Esophagus muscularis mucosa (tissue), 4 donors: ENCODE measurements at regions of chr9 and their contacts with region 1.

Region 1: DNA sequence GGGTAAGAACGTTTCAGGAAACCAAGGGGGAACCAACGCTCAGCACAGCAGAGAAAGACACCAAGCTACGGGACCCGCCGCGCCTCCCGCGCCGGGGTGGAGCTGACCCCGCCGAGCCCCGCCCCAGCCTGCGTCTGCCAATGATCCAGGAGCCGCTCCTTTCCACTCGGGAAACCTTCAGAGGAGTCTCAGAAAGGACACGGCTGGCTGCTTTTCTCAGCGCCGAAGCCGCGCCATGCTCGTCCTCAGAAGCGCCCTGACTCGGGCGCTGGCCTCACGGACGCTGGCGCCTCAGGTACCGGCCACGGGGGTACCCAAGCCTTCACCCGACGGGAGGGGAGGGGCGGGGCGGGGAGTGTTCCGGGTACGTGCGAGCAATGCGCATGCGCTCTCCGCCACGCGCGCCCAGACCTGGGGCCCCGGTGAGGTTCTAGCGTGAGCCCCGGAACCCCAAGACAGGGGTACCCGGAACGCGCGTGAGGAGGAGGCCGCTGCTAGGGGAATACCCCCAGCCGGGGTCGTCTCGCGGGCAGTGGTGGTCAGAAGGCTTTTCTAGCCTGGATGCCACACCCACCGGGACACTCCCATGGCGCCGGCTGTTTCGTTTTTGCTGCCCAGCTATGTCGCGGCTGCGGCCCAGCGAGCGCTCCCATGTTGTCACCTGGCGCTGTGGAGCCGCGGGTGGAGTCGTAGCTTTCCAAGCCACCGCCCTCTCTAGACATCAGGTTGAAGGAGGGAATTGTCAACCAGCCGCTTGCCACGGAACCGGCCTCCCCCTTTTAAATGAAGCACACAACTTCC is at the start of gene NIPSNAP3A:
- DNase-seq: peak; percentile 95
- H3K4me3 ChIP-seq: peak within 1 kb of the TSS; percentile 65 to 98 (median 84)
- H3K27ac ChIP-seq: peak within 1 kb of the TSS; percentile 81 to 95 (median 92)
- H3K4me1 ChIP-seq: peaks cover 11 to 23% (median 19%) of the 10 kb centered on the region in 4 donors
- H3K27me3 ChIP-seq: no peaks in the 10 kb centered on the region
- CTCF ChIP-seq: no peak
- EP300 ChIP-seq: no peak
- POLR2A ChIP-seq: no peak
- total RNA-seq, gene NIPSNAP3A: 19.0 to 33.3 (median 29.7) TPM

Region 2: DNA sequence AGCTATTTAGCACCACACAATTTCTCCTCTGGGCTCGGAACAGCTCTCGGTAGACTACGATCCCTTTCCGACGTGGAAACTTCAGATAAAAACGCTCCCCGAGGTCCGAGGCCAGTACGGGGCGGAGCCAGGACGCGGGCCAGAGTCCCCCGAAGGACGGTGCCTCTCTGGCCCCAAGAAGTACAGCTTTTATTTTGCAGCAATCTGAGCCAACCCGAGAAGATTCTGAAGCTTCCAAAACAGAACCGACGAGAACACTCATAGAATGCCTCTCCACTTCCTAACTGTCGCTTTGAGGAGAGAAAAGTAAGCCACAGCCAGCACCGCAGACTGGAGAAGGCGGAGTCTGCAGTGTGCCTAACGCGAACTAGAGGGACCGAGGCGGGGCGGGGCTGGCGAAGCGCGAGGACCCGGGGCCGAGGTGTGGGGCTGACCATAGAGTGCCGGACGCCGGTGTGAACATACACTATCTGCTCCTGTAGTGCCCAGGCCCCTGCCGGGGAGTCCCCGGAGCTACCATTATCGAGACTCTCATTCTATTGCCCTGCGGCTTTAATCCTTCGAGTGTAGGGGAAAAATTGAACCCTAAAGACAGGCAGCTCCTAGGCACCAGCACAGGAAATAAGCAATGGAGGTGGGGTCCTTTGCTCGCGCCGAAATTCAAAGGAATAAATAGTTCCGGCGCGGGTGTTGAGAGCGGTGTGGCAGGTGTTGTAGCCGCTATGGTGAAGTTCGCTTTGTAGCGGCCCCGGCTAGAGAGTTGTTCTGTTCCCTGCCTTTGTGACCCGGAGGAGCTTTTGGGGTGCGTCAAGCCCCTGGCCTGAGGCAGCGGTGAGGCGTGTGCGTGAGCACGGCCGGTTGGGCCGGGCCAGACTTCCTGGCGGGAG is 653.9 kb before region 1 on chr9 and contains the start of gene SMC2:
- intact Hi-C with region 1: loop called (anchors 10 kb)
- DNase-seq: peak; percentile 98
- H3K4me3 ChIP-seq: peak within 1 kb of the TSS; percentile 59 to 90 (median 74)
- H3K27ac ChIP-seq: peak within 1 kb of the TSS; percentile 90 to 94 (median 93)
- H3K4me1 ChIP-seq: peaks cover 22 to 56% (median 50%) of the 10 kb centered on the region in 4 donors
- H3K27me3 ChIP-seq: no peaks in the 10 kb centered on the region
- CTCF ChIP-seq: peak in 1 of 3 experiments; percentile 6
- EP300 ChIP-seq: no peak
- POLR2A ChIP-seq: no peak
- total RNA-seq, gene SMC2: 9.8 to 11.5 (median 10.1) TPM

Region 3: DNA sequence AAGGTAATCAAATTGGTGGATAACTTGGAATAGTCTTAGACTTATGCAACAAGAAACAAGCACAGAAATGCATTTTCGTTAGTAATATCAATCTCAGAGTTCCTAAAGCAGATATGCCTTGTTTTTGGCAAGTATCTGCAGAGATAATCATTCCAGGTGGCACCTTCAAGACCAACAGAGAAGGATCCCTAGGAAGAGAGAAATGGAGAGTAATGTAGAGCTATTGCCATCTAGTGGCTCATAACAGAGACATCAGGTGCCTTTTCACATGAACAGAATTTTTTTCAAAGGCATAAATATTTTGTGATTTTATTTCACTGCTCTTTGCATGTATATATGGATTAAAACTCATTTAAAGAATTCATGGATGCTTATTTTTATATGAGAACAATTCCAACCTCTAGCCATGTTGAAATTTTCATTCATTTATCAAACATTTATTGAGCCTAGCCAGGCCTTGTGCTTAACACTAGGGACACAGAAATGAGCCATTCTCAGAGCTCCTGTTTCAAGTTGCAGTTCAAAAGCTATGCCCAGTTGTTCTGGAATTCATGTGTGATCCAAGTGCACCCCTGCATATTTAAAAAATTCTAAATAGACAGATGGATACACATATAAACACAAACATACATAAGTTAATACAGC is 361.2 kb before region 1 on chr9:
- intact Hi-C with region 1: loop called (anchors 5 kb)
- DNase-seq: no peak
- H3K4me3 ChIP-seq: no peak overlapping the region
- H3K27ac ChIP-seq: no peak overlapping the region
- H3K4me1 ChIP-seq: no peaks in the 10 kb centered on the region
- H3K27me3 ChIP-seq: no peaks in the 10 kb centered on the region
- CTCF ChIP-seq: peak; percentile 30 to 74 (median 58)
- EP300 ChIP-seq: no peak
- POLR2A ChIP-seq: no peak